ENCODE measurements at regions of chr9 and their contacts with region 1.

Region 1: GRCh38 chr9:110183208-110184145 is 24.5 kb downstream of the C9orf152 start:
- DNase-seq: peak; percentile 74
- H3K4me3 ChIP-seq: no peak overlapping the region
- H3K27ac ChIP-seq: no peak overlapping the region
- H3K4me1 ChIP-seq: peaks cover 4% of the 10 kb centered on the region
- H3K27me3 ChIP-seq: peaks cover 5% of the 10 kb centered on the region in 2 experiments
- CTCF ChIP-seq: peak; percentile 62 to 68
- POLR2A ChIP-seq: no peak

Region 2: DNA sequence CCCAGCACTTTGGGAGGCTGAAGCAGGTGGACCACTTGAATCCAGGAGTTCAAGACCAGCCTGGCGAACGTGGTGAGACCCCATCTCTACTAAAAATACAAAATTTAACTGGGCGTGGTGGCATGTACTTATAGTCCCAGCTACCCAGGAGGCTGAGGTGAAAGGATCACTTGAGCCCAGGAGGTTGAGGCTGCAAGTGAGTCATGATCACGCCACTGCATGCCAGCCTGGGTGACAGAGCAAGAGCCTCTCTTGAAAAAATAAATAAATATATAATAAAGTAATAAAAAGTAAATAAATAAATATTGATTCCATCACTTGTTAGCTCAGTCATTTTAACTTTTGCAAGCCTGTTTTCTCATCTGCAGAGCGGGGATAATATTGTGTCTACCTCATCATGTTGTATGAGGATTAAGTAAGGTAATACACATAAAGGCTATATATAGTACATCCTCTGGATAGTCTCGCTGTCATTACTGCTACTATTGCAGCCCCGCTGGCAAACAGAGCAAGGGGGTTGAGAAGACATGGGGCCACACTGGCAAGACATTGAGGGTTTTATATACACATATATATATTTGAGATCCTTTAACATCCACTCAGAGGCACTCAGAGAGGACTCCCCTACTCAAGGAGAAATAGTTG is 186.4 kb before region 1 on chr9:
- CTCF ChIA-PET with region 1: no interaction called
- POLR2A ChIA-PET with region 1: no interaction called
- dilution Hi-C with region 1: no loop called
- intact Hi-C with region 1: no loop called
- DNase-seq: no peak
- H3K4me3 ChIP-seq: no peak overlapping the region
- H3K27ac ChIP-seq: no peak overlapping the region
- H3K4me1 ChIP-seq: peaks cover 4% of the 10 kb centered on the region
- H3K27me3 ChIP-seq: no peaks in the 10 kb centered on the region
- CTCF ChIP-seq: no peak
- POLR2A ChIP-seq: no peak

Region 3: DNA sequence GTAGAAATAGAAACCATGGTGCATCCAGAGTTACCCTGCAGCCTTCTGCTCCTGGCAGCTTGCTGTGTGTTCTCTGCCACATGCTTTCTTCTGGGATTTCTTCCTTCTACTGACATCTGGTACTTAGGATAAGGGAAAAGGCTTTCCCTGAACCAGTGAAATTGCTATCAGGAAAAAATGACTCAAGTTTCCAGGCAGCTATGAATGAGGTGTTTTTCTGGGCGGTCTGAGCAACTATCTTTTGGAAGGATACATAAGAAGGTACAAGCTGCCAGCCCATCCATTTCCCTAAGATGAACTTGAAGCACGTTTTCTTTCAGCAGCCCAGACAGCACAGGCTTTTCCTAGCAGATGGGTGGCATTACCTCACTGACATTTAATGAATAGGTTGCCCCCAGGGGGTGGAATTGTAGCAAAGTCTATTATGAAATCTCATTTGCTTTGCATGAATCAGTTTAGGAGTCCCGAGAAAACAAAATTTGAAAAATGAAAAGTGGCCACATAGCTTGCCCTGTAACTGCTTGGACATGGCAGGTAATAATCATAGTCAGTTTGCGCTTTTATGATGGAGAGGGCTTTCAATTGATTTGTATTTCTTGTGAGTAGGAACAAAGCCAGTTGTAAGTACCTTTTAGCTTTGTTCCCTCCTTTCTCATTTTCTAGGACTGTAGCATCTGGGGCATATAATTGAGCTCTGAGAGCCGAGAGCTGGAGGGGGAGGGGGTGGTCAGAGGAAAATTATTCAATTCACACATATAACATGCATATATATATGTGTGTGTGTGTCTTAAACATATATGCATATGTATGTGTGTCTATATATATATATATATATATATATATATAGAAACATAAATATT is 84.0 kb before region 1 on chr9:
- CTCF ChIA-PET with region 1: no interaction called
- POLR2A ChIA-PET with region 1: no interaction called
- dilution Hi-C with region 1: no loop called
- intact Hi-C with region 1: no loop called
- DNase-seq: peak; percentile 80
- H3K4me3 ChIP-seq: no peak overlapping the region
- H3K27ac ChIP-seq: peak overlapping the region; percentile 7
- H3K4me1 ChIP-seq: peaks cover 17% of the 10 kb centered on the region
- H3K27me3 ChIP-seq: no peaks in the 10 kb centered on the region
- CTCF ChIP-seq: no peak
- POLR2A ChIP-seq: no peak

Region 4: DNA sequence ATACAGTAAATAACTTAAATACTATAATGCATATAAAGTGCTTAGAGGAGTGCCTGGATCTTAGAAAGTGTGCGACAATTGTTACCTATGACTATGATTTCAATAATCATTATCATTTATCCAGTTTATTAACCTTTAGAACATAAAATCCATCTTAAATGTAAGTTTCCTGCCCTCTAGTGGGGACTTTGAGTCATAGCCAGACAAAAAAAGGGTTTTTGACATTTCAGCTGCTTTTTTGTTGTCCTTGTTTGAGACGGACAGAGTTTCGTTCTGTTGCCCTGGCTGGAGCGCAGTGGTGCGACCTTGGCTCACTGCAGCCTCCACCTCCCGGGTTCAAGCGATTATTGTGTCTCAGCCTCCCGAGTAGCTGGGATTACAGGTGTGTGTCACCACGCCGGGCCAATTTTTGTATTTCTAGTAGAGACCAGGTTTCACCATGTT is 34.2 kb after region 1 on chr9:
- CTCF ChIA-PET with region 1: interaction called, 155 read pairs
- POLR2A ChIA-PET with region 1: no interaction called
- dilution Hi-C with region 1: no loop called
- intact Hi-C with region 1: loop called (anchors 1 kb)
- DNase-seq: peak; percentile 65
- H3K4me3 ChIP-seq: no peak overlapping the region
- H3K27ac ChIP-seq: no peak overlapping the region
- H3K4me1 ChIP-seq: no peaks in the 10 kb centered on the region
- H3K27me3 ChIP-seq: peaks cover 4 to 11% of the 10 kb centered on the region in 2 experiments
- CTCF ChIP-seq: peak; percentile 47 to 62
- POLR2A ChIP-seq: no peak

Region 5: GRCh38 chr9:110246214-110246613 is 62.7 kb after region 1 on chr9:
- CTCF ChIA-PET with region 1: no interaction called
- POLR2A ChIA-PET with region 1: no interaction called
- dilution Hi-C with region 1: no loop called
- intact Hi-C with region 1: no loop called
- DNase-seq: no peak
- H3K4me3 ChIP-seq: no peak overlapping the region
- H3K27ac ChIP-seq: no peak overlapping the region
- H3K4me1 ChIP-seq: no peaks in the 10 kb centered on the region
- H3K27me3 ChIP-seq: no peaks in the 10 kb centered on the region
- CTCF ChIP-seq: no peak
- POLR2A ChIP-seq: no peak

Region 6: GRCh38 chr9:110256380-110257096 is 73.1 kb after region 1 on chr9 and contains the start of gene TXN:
- CTCF ChIA-PET with region 1: interaction called, 8 read pairs
- POLR2A ChIA-PET with region 1: interaction called, 3 read pairs
- dilution Hi-C with region 1: no loop called
- intact Hi-C with region 1: loop called (anchors 2 kb)
- DNase-seq: peak; percentile 85
- H3K4me3 ChIP-seq: peak within 1 kb of the TSS; percentile 40 to 93 (median 77)
- H3K27ac ChIP-seq: peak within 1 kb of the TSS; percentile 67
- H3K4me1 ChIP-seq: peaks cover 23% of the 10 kb centered on the region
- H3K27me3 ChIP-seq: no peaks in the 10 kb centered on the region
- CTCF ChIP-seq: no peak
- POLR2A ChIP-seq: peak; percentile 96
- total RNA-seq, gene TXN: 280 and 286 TPM in 2 replicates

Region 7: DNA sequence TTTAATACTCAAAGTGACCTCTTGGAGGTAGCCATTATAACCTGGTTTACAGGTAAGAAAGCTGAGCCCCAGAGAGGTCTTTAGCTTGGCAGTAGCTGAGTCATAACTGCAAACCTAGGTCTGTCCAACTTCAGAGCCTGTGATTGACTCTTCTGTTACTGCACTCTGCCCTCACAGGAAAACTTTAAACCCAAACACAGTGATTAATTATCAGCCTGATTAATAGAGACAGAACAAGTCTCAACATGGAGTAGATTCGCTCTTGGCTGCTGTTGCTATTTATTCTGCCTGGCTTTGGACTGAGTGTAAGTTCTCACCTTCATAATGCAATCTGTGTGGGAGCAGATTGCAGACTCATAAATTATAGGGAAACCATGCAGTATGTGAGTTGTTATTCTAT is 100.3 kb after region 1 on chr9:
- CTCF ChIA-PET with region 1: no interaction called
- POLR2A ChIA-PET with region 1: no interaction called
- dilution Hi-C with region 1: no loop called
- intact Hi-C with region 1: no loop called
- DNase-seq: no peak
- H3K4me3 ChIP-seq: no peak overlapping the region
- H3K27ac ChIP-seq: no peak overlapping the region
- H3K4me1 ChIP-seq: no peaks in the 10 kb centered on the region
- H3K27me3 ChIP-seq: peaks cover 7% of the 10 kb centered on the region in 2 experiments
- CTCF ChIP-seq: no peak
- POLR2A ChIP-seq: no peak

Region 8: DNA sequence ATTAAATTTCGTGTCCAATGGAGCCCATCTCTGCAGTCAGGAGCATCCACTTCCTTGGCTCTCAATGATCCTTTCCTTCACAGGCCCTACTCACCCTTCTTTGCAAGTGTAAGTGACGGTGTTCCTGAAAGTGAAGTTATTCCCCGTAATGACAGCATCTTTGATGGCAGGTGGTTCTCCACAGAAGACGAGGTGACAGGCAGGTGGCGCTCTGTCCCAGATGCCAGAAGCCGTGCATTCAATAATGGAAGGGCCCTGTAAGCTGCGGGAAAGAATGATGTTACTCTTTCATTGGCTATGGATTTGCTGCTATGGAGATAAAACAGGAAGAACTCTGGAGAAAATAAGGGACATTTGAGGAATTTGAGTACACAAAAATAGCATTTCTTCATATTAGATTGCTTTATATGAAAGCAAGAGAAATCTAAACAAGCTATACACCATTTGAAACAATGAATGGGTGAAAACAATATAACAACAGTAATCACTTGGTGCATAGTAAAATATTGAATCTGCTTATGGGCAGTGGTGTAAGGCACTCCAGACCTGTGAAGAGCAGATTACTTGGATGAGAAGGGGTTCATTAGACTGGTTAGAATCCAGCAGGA is 244.1 kb after region 1 on chr9:
- CTCF ChIA-PET with region 1: interaction called, 11 read pairs
- POLR2A ChIA-PET with region 1: no interaction called
- dilution Hi-C with region 1: no loop called
- intact Hi-C with region 1: loop called (anchors 5 kb)
- DNase-seq: peak; percentile 46
- H3K4me3 ChIP-seq: no peak overlapping the region
- H3K27ac ChIP-seq: no peak overlapping the region
- H3K4me1 ChIP-seq: no peaks in the 10 kb centered on the region
- H3K27me3 ChIP-seq: no peaks in the 10 kb centered on the region
- CTCF ChIP-seq: peak; percentile 60 to 75
- POLR2A ChIP-seq: no peak

Region 9: DNA sequence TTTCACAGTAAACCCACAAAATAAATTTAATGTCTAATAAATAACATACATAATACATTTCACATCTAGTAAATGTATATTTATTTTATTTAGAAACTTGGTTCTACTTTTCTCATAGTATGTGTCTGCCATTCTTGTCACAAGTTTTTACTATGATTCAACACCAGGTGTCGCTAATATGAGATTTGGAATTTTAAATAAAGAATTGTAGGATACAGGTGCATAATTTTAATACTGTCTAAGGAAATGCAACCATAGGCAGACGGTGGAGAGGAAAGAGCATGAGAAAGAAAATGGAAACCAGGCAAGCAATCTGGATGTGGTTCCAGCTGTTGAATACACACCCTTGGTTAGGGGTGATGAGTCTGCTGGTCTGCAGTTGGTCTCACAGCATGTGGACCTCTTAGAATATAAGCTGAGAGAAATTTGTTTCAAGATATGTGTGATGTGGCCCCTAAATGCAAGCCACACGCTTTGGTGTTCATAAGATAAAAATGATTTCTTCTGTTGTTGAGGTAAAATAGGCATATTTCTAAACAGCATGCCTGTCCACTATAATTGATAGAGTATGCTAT is 268.8 kb after region 1 on chr9:
- CTCF ChIA-PET with region 1: interaction called, 4 read pairs
- POLR2A ChIA-PET with region 1: no interaction called
- dilution Hi-C with region 1: no loop called
- intact Hi-C with region 1: loop called (anchors 10 kb)
- DNase-seq: peak; percentile 20
- H3K4me3 ChIP-seq: no peak overlapping the region
- H3K27ac ChIP-seq: no peak overlapping the region
- H3K4me1 ChIP-seq: no peaks in the 10 kb centered on the region
- H3K27me3 ChIP-seq: no peaks in the 10 kb centered on the region
- CTCF ChIP-seq: peak in 1 of 2 donors; percentile 10
- POLR2A ChIP-seq: no peak